ENCODE measurements at regions of chr20 and their contacts with region 1.

Region 1: GRCh38 chr20:20518263-20518662 is 150.4 kb downstream of the INSM1 start:
- DNase-seq: no peak
- H3K4me3 ChIP-seq: no peak overlapping the region
- H3K27ac ChIP-seq: no peak overlapping the region
- H3K4me1 ChIP-seq: no peaks in the 10 kb centered on the region
- H3K27me3 ChIP-seq: no peaks in the 10 kb centered on the region
- CTCF ChIP-seq: no peak
- POLR2A ChIP-seq: no peak

Region 2: DNA sequence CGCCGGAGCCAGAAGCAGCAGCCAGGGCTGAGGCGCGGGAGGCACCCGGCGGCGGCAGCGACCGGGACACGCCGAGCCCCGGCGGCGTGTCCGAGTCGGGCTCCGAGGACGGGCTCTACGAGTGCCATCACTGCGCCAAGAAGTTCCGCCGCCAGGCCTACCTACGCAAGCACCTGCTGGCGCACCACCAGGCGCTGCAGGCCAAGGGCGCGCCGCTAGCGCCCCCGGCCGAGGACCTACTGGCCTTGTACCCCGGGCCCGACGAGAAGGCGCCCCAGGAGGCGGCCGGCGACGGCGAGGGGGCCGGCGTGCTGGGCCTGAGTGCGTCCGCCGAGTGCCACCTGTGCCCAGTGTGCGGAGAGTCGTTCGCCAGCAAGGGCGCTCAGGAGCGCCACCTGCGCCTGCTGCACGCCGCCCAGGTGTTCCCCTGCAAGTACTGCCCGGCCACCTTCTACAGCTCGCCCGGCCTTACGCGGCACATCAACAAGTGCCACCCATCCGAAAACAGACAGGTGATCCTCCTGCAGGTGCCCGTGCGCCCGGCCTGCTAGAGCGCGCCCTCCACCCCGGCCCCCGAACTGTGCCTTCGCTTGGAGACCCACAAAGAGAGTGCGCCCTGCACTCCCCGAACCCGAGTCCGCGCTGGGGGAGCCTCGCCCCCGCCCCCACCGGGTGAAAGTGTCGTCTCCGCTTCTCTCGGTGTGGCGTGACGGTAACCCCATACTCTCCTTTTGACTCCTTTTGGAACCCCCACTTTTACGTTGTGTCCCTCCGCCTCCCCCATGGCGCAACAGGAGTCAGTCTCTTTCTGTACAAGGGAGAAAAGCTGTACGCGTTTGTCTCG is 148.8 kb before region 1 on chr20:
- CTCF ChIA-PET with region 1: no interaction called
- POLR2A ChIA-PET with region 1: no interaction called
- dilution Hi-C with region 1: loop called (anchors 10 kb)
- intact Hi-C with region 1: no loop called
- DNase-seq: no peak
- H3K4me3 ChIP-seq: no peak overlapping the region
- H3K27ac ChIP-seq: no peak overlapping the region
- H3K4me1 ChIP-seq: no peaks in the 10 kb centered on the region
- H3K27me3 ChIP-seq: peaks cover 71 to 91% of the 10 kb centered on the region in 2 experiments
- CTCF ChIP-seq: no peak
- POLR2A ChIP-seq: no peak

Measured in endothelial cell of umbilical vein (primary cell).